Endothelial cell of umbilical vein (primary cell): ENCODE measurements at regions of chr5 and their contacts with region 1.

Region 1: DNA sequence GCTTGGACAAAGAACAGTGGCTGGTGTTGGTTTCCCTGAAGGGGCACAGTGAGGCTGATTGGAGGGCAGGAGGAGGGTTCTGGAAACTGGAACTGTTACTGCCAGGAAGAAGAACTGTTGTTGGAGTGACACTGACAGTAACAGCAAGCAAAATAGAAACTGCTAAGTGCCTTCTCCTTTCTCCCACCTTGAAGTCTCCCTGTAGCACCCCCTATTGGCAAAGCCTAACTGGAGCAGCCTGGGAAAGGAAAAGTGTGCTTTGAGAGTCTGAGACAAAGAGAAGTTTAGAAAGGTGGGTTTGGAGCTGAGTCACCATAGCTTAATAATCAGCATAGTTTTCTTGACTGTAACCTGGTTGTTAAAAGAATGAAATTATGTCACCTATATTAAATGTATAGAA is 2.5 kb upstream of the TMEM174 start:
- DNase-seq: peak; percentile 62
- H3K4me3 ChIP-seq: no peak overlapping the region
- H3K27ac ChIP-seq: no peak overlapping the region
- H3K4me1 ChIP-seq: no peaks in the 10 kb centered on the region
- H3K27me3 ChIP-seq: peaks cover 21 to 41% of the 10 kb centered on the region in 2 experiments
- CTCF ChIP-seq: peak; percentile 75 to 79
- POLR2A ChIP-seq: no peak

Region 2: GRCh38 chr5:72920690-72921502 is 249.6 kb before region 1 on chr5:
- CTCF ChIA-PET with region 1: interaction called, 11 read pairs
- POLR2A ChIA-PET with region 1: no interaction called
- dilution Hi-C with region 1: no loop called
- intact Hi-C with region 1: loop called (anchors 10 kb)
- DNase-seq: peak; percentile 62
- H3K4me3 ChIP-seq: no peak overlapping the region
- H3K27ac ChIP-seq: no peak overlapping the region
- H3K4me1 ChIP-seq: no peaks in the 10 kb centered on the region
- H3K27me3 ChIP-seq: no peaks in the 10 kb centered on the region
- CTCF ChIP-seq: peak in 1 of 2 donors; percentile 5
- POLR2A ChIP-seq: no peak

Region 3: DNA sequence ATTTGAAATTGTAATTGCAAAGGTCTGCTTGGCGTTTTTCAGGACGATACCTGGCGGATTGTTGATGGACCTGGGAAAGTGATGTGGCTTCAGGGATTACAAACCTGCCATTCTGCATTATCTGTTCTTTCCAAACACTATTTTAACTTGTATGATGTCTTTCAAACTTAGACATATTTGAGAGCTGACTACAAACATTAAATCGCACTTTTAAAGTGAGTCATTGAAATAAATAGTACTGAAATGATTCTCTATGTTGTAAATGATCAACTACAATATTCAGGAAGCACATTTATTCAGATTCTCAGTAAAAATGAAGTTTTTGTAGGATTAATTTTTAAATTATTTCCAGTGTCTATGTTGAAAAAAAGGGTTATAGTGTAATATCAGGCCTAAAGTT is 82.5 kb before region 1 on chr5:
- CTCF ChIA-PET with region 1: interaction called, 57 read pairs
- POLR2A ChIA-PET with region 1: no interaction called
- dilution Hi-C with region 1: no loop called
- intact Hi-C with region 1: loop called (anchors 1 kb)
- DNase-seq: no peak
- H3K4me3 ChIP-seq: no peak overlapping the region
- H3K27ac ChIP-seq: no peak overlapping the region
- H3K4me1 ChIP-seq: no peaks in the 10 kb centered on the region
- H3K27me3 ChIP-seq: no peaks in the 10 kb centered on the region
- CTCF ChIP-seq: no peak
- POLR2A ChIP-seq: no peak

Region 4: DNA sequence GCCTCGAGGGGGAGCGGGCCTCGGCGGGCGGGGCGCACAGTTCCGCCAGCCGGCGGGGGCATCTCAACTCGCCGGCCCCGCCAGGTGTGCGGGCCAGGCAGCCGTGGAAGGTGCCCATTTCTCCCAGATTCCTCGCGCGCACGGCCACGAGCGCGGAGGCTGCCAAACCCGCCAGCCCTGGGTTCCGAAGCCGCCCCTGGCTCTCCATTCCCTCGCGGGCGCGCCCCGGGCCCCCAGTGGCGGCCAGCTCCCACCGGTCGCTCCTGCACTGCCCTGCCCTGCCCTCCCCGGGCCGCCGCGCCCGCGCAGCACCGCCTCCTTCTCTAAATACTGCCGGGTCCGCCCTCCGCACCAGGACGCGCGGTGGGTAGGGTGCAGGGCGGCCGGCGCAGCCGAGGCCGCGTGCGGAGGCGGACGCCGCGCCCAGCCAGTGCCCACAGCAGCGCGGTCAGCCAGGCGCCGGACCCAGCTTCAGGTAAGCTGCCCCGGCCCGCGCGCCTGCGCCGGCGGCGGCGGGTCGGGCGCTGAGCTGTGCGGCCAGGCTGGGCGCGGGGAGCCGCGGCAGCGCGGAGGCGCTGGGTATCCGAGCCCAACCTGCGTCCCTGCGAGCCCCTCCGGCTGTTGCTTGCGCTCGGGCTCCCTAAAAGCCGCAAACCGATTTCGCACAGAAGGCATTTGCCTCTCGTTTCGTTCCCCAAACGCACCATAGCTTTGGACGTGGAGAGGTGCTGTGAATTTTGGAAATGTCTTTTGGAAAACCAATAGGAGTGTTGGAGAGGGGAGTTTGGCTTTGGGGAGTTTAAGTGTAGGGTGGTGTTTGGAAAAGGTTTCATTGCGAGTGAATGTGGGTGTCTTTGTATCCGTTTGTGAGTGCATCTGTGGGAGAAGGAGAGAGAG is 50.1 kb before region 1 on chr5 and contains the start of gene TMEM171:
- CTCF ChIA-PET with region 1: interaction called, 14 read pairs
- POLR2A ChIA-PET with region 1: no interaction called
- dilution Hi-C with region 1: no loop called
- intact Hi-C with region 1: no loop called
- DNase-seq: peak; percentile 37
- H3K4me3 ChIP-seq: peak within 1 kb of the TSS; percentile 39 to 95 (median 86)
- H3K27ac ChIP-seq: no peak within 1 kb of the TSS
- H3K4me1 ChIP-seq: peaks cover 32% of the 10 kb centered on the region
- H3K27me3 ChIP-seq: no peaks in the 10 kb centered on the region
- CTCF ChIP-seq: no peak
- POLR2A ChIP-seq: peak; percentile 65
- total RNA-seq, gene TMEM171: 5.0 and 5.6 TPM in 2 replicates

Region 5: GRCh38 chr5:73152411-73153388 is 17.8 kb before region 1 on chr5:
- CTCF ChIA-PET with region 1: interaction called, 24 read pairs
- POLR2A ChIA-PET with region 1: no interaction called
- dilution Hi-C with region 1: no loop called
- intact Hi-C with region 1: no loop called
- DNase-seq: no peak
- H3K4me3 ChIP-seq: no peak overlapping the region
- H3K27ac ChIP-seq: peak overlapping the region; percentile 38
- H3K4me1 ChIP-seq: peaks cover 23% of the 10 kb centered on the region
- H3K27me3 ChIP-seq: no peaks in the 10 kb centered on the region
- CTCF ChIP-seq: no peak
- POLR2A ChIP-seq: no peak

Region 6: GRCh38 chr5:73201547-73202513 is 31.3 kb after region 1 on chr5:
- CTCF ChIA-PET with region 1: interaction called, 43 read pairs
- POLR2A ChIA-PET with region 1: no interaction called
- dilution Hi-C with region 1: no loop called
- intact Hi-C with region 1: no loop called
- DNase-seq: peak; percentile 60
- H3K4me3 ChIP-seq: no peak overlapping the region
- H3K27ac ChIP-seq: no peak overlapping the region
- H3K4me1 ChIP-seq: no peaks in the 10 kb centered on the region
- H3K27me3 ChIP-seq: peaks cover 29 to 30% of the 10 kb centered on the region in 2 experiments
- CTCF ChIP-seq: peak; percentile 78 to 91
- POLR2A ChIP-seq: no peak

Region 7: GRCh38 chr5:73233347-73234200 is 63.1 kb after region 1 on chr5:
- CTCF ChIA-PET with region 1: no interaction called
- POLR2A ChIA-PET with region 1: no interaction called
- dilution Hi-C with region 1: no loop called
- intact Hi-C with region 1: no loop called
- DNase-seq: peak; percentile 17
- H3K4me3 ChIP-seq: peak overlapping the region in 1 of 3 experiments; percentile 1
- H3K27ac ChIP-seq: no peak overlapping the region
- H3K4me1 ChIP-seq: peaks cover 5% of the 10 kb centered on the region
- H3K27me3 ChIP-seq: peaks cover 67 to 97% of the 10 kb centered on the region in 2 experiments
- CTCF ChIP-seq: peak in 1 of 2 donors; percentile 9
- POLR2A ChIP-seq: no peak